K562 (cell line): ENCODE measurements at regions of chr17 and their contacts with region 1.

Region 1: DNA sequence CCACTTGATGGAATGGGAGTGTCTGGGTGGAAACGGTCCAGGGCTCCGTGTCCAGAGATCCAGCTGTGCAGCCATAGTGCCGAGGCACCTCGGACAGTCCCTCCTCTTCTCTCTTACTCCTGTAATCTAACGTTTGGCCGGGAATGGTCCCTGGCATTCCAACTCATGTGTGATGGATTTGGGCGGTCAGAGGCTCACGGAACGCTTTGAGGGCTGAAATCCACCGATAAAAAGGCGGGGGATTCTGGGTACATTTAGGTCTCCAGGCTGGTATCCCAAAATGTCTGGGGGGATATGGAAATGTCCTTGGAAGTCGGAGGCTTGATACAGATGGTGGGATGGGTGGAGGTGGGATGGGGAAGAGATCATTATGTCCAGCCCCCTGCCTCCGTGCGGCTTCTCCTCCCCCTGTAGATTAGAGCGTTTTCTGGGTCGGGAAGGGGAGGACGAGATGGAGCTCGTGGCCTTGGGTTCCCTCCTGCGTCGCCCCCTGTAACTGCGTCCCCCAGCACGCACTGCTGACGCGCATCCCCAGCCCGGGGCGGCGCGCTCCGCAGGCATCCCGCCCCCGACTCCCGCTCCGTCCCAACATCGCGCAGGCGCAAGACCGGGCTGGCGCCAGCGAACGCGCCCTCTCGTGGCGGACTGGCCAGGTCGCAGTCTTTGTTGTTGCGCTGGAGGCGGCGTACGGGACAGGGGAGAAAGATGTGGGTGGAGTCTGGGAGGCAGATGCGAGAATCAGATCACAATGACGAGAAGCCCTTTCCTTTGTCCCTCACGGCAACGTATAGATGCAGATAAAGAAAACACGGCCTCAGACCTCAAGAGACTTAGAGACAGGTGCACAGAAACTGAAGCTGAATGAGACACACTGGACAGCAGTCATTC is 4.5 kb upstream of the SGCA start:
- DNase-seq: peak; percentile 94 to 99 (median 99)
- ATAC-seq: peak; percentile 99
- H3K4me3 ChIP-seq: peak overlapping the region; percentile 45
- H3K27ac ChIP-seq: no peak overlapping the region
- H3K4me1 ChIP-seq: peaks cover 10 to 20% of the 10 kb centered on the region in 2 experiments; a peak in 3 of 5 replicates
- H3K27me3 ChIP-seq: no peaks in the 10 kb centered on the region
- CTCF ChIP-seq: peak; percentile 94 to 97 (median 97)
- EP300 ChIP-seq: 0 out of 2 replicates have a peak, but pooled peaks have one; percentile 25
- POLR2A ChIP-seq: 0 out of 2 replicates have a peak, but pooled peaks have one; percentile 22
- RAD21 ChIP-seq: peak; percentile 79 to 88

Region 2: GRCh38 chr17:49788478-49789242 is 372.6 kb before region 1 on chr17 and contains the start of gene KAT7:
- CTCF ChIA-PET with region 1: no interaction called
- POLR2A ChIA-PET with region 1: no interaction called
- in situ Hi-C with region 1: no loop called
- intact Hi-C with region 1: no loop called
- DNase-seq: peak; percentile 98 to 99 (median 98)
- ATAC-seq: peak; percentile 97
- H3K4me3 ChIP-seq: peak within 1 kb of the TSS; percentile 95
- H3K27ac ChIP-seq: peak within 1 kb of the TSS; percentile 100
- H3K4me1 ChIP-seq: peaks cover 10 to 17% of the 10 kb centered on the region in 2 experiments
- H3K27me3 ChIP-seq: no peaks in the 10 kb centered on the region
- CTCF ChIP-seq: no peak
- EP300 ChIP-seq: peak; percentile 37; the same call in 1 of the 2 replicates
- POLR2A ChIP-seq: peak; percentile 99
- RAD21 ChIP-seq: 0 out of 4 replicates have a peak, but pooled peaks of 1 of the 2 experiments have one; percentile 17
- polyA plus RNA-seq, gene KAT7: 10.8 to 10.9 TPM

Region 3: DNA sequence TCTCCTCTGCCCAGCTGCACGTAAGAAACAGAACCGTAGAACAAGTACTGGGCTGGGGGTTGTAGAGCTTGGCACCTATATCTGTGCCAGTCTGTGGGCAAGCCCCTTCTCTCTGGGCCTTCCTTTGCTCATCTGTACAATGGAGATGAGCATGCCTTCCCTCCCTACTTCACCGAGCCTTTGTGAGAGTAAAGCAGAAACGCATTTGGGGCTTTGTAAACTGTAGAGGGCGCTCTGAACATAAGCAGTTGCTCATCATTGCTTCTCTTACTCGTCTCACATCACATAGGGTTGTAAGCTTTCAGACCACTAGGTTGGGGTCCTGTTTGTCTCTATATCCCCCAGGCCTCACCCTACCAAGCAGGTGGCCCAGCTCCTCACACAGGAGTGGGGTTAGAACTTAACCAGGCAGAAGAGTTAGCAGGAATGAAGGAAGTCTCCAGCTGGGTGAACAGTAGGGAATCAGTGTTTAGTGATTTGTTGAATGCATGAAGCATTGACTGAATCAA is 46.4 kb before region 1 on chr17:
- CTCF ChIA-PET with region 1: interaction called, 3 read pairs
- POLR2A ChIA-PET with region 1: no interaction called
- in situ Hi-C with region 1: no loop called
- intact Hi-C with region 1: loop called (anchors 1 kb)
- DNase-seq: peak in 3 of 4 experiments; percentile 38 to 76 (median 54)
- ATAC-seq: peak; percentile 64
- H3K4me3 ChIP-seq: no peak overlapping the region
- H3K27ac ChIP-seq: no peak overlapping the region
- H3K4me1 ChIP-seq: peaks cover 0 to 42% of the 10 kb centered on the region in 2 experiments
- H3K27me3 ChIP-seq: peaks cover 20 to 30% of the 10 kb centered on the region in 2 experiments; a peak in 4 of 5 replicates
- CTCF ChIP-seq: peak; percentile 77 to 83 (median 81)
- EP300 ChIP-seq: no peak
- POLR2A ChIP-seq: no peak
- RAD21 ChIP-seq: peak; percentile 29 to 66; a peak in 3 of 4 replicates

Region 4: GRCh38 chr17:50139950-50140871 is 21.1 kb before region 1 on chr17:
- CTCF ChIA-PET with region 1: interaction called, 3 read pairs
- POLR2A ChIA-PET with region 1: no interaction called
- in situ Hi-C with region 1: no loop called
- intact Hi-C with region 1: loop called (anchors 2 kb)
- DNase-seq: peak; percentile 87 to 92 (median 88)
- ATAC-seq: peak; percentile 96
- H3K4me3 ChIP-seq: no peak overlapping the region
- H3K27ac ChIP-seq: no peak overlapping the region
- H3K4me1 ChIP-seq: peaks cover 6 to 23% of the 10 kb centered on the region in 2 experiments; a peak in 3 of 5 replicates
- H3K27me3 ChIP-seq: no peaks in the 10 kb centered on the region
- CTCF ChIP-seq: peak; percentile 94 to 95 (median 95)
- EP300 ChIP-seq: peak; percentile 27; the same call in 1 of the 2 replicates
- POLR2A ChIP-seq: no peak
- RAD21 ChIP-seq: peak; percentile 70 to 85

Region 5: DNA sequence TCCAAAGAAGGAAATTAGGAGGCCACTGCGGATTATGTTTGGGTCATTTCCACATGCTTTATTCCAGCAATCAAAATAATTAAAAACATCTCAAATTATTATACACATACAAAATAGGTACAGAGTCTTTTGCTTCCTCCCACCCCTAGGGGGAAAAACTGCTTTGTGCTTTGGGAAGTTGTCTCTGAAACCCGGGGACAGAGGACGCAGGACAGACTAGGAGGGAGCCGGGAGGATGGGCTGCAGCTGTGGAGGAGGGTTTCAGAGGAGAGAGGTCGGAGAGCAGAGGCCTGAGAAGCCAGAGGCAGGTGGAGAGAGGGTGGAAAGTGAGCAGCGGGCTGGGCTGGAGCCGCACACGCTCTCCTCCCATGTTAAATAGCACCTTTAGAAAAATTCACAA is 22.8 kb after region 1 on chr17:
- CTCF ChIA-PET with region 1: no interaction called
- POLR2A ChIA-PET with region 1: no interaction called
- in situ Hi-C with region 1: no loop called
- intact Hi-C with region 1: no loop called
- DNase-seq: peak in 2 of 4 experiments; percentile 29 to 33
- ATAC-seq: peak; percentile 43; the same call in 1 of the 3 replicates
- H3K4me3 ChIP-seq: no peak overlapping the region
- H3K27ac ChIP-seq: no peak overlapping the region
- H3K4me1 ChIP-seq: peaks cover 4 to 24% of the 10 kb centered on the region in 2 experiments; a peak in 4 of 5 replicates
- H3K27me3 ChIP-seq: peaks cover 51 to 81% of the 10 kb centered on the region in 2 experiments
- CTCF ChIP-seq: no peak
- EP300 ChIP-seq: no peak
- POLR2A ChIP-seq: no peak
- RAD21 ChIP-seq: no peak

Region 6: DNA sequence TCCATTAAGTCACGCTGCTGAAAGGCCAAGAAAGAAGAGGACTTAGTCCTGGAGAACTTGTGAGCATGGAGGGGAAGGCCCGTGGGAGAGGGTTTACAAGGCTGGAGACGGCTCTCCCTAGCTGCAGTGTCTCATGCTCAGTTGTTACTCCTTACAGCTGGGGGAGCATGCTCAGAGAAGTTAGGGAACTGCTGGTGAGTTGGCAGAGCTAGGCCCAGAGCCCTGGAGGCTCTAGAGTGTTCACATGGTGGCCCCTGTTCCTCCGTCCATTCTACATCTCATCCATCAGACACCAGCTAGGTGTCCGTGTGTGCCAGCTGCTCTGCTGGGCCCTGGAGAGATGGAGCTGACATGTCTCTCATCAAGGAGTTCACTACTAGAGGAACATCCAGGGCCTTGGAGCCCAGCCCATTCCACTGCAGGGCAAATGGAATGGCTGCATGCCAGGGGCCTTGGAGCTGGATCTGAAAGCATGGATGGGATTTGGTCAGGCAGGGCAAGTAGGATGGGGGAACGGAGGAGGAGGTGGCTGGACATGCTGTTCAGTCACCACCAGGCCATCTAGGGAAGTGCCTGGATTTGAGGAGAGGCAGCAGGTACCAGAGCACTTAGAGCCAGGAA is 190.9 kb after region 1 on chr17:
- CTCF ChIA-PET with region 1: no interaction called
- POLR2A ChIA-PET with region 1: no interaction called
- in situ Hi-C with region 1: no loop called
- intact Hi-C with region 1: no loop called
- DNase-seq: no peak
- ATAC-seq: no peak
- H3K4me3 ChIP-seq: no peak overlapping the region
- H3K27ac ChIP-seq: no peak overlapping the region
- H3K4me1 ChIP-seq: peaks cover 3 to 34% of the 10 kb centered on the region in 2 experiments; a peak in 4 of 5 replicates
- H3K27me3 ChIP-seq: no peaks in the 10 kb centered on the region; a peak in 1 of 5 replicates
- CTCF ChIP-seq: no peak
- EP300 ChIP-seq: no peak
- POLR2A ChIP-seq: no peak
- RAD21 ChIP-seq: no peak

Region 7: GRCh38 chr17:50452610-50453300 is 291.5 kb after region 1 on chr17:
- CTCF ChIA-PET with region 1: no interaction called
- POLR2A ChIA-PET with region 1: no interaction called
- in situ Hi-C with region 1: no loop called
- intact Hi-C with region 1: no loop called
- DNase-seq: no peak
- ATAC-seq: no peak
- H3K4me3 ChIP-seq: no peak overlapping the region
- H3K27ac ChIP-seq: no peak overlapping the region
- H3K4me1 ChIP-seq: peaks cover 7 to 9% of the 10 kb centered on the region in 2 experiments; a peak in 4 of 5 replicates
- H3K27me3 ChIP-seq: peaks cover 0 to 27% of the 10 kb centered on the region in 2 experiments; a peak in 2 of 5 replicates
- CTCF ChIP-seq: no peak
- EP300 ChIP-seq: no peak
- POLR2A ChIP-seq: no peak
- RAD21 ChIP-seq: no peak